PC-3 (cell line): ENCODE measurements at regions of chr11 and their contacts with region 1.

Region 1: DNA sequence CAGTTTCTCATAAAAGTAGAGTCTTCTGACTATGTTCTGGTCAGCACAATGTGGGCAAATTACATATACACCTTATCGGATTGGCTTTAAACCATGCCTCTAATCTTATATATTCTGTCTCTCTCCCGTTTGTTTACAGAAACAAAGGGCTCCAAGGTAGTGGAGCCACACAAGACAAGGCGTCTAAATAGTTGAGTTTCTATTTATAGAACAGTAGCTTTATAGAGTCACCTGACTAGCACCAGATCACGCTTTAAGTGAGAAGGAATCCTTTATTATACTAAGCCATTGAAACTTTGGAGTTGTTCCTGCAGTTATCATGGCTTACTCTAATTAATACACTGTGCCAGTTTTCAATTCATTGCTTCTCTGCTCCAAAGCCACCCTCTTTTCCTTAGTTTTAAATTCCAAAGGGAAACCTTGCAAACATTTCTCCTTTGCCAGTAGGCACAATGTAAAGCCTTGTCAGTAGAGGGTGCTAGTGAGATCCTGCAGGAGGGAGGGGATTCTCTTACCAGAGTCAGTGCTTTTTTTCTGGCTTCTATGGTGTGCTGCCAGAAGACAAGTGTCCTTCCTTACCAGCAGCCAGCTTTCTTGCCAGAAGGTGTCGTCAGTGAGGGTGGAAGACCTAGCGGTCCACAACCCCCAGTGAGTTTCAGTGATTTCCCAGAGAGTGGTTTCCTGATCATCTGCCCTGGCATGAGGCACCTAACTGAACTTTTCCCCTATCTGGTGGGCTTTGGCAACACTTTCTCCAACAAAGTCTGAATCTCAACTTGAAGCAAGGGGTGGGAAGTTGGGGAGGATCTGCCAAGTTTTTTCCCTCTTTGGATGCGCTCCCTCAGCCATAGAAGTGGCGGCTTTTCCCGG is 71.7 kb downstream of the RAB38 start:
- DNase-seq: peak; percentile 79
- ATAC-seq: peak; percentile 49
- H3K4me3 ChIP-seq: no peak overlapping the region
- H3K27ac ChIP-seq: peak overlapping the region; percentile 59
- H3K4me1 ChIP-seq: peaks cover 30% of the 10 kb centered on the region
- H3K27me3 ChIP-seq: no peaks in the 10 kb centered on the region
- CTCF ChIP-seq: peak; percentile 88

Region 2: GRCh38 chr11:88231894-88232482 is 128.4 kb after region 1 on chr11:
- CTCF ChIA-PET with region 1: no interaction called
- POLR2A ChIA-PET with region 1: no interaction called
- intact Hi-C with region 1: no loop called
- DNase-seq: peak; percentile 70
- ATAC-seq: peak; percentile 99
- H3K4me3 ChIP-seq: no peak overlapping the region
- H3K27ac ChIP-seq: no peak overlapping the region
- H3K4me1 ChIP-seq: no peaks in the 10 kb centered on the region
- H3K27me3 ChIP-seq: no peaks in the 10 kb centered on the region
- CTCF ChIP-seq: peak; percentile 86

Region 3: GRCh38 chr11:88886796-88887195 is 783.2 kb after region 1 on chr11:
- CTCF ChIA-PET with region 1: no interaction called
- POLR2A ChIA-PET with region 1: no interaction called
- intact Hi-C with region 1: loop called (anchors 5 kb)
- DNase-seq: peak; percentile 94
- ATAC-seq: peak; percentile 99
- H3K4me3 ChIP-seq: no peak overlapping the region
- H3K27ac ChIP-seq: no peak overlapping the region
- H3K4me1 ChIP-seq: no peaks in the 10 kb centered on the region
- H3K27me3 ChIP-seq: no peaks in the 10 kb centered on the region
- CTCF ChIP-seq: peak; percentile 87